Activated naive CD4-positive, alpha-beta T cell treated with anti-CD3 and anti-CD28 coated beads for 36 hours (primary cell): ENCODE measurements at regions of chr10 and their contacts with region 1.

Region 1: DNA sequence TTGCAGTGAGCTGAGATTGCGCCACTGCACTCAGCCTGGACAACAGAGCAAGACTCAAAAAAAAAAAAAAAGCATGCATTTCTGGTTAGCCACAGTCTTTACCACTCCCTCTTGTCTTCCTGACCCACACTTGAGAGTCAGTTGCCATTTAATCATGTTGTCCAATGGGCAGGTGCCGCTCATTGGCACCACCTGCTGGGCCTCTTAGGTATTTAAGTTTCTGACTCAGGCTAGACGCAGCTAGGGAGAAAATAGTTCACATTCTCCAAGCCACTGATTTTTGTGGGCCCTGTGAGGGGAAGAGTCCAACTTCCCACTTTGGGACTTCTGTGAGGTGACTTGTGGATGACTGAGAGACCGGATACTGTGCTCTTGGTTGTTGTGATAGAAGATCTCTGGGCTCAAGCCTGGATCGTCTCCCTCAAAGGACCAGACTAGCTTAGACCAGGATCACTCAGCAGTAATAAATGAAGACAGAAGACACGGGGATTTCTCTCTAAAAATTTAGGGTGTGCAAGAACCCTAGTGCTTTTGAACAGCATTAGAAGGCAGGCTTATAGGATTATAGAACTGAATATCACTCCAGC is 26.8 kb upstream of the SORCS3 start:
- DNase-seq: peak; percentile 55
- H3K4me3 Mint-ChIP-seq: no peak overlapping the region
- H3K27ac Mint-ChIP-seq: no peak overlapping the region
- H3K4me1 Mint-ChIP-seq: no peaks in the 10 kb centered on the region
- H3K27me3 Mint-ChIP-seq: no peaks in the 10 kb centered on the region

Region 2: GRCh38 chr10:104406715-104407650 is 207.4 kb before region 1 on chr10:
- CTCF ChIA-PET with region 1: interaction called, 4 read pairs
- intact Hi-C with region 1: loop called (anchors 1 kb)
- DNase-seq: no peak
- H3K4me3 Mint-ChIP-seq: no peak overlapping the region
- H3K27ac Mint-ChIP-seq: no peak overlapping the region
- H3K4me1 Mint-ChIP-seq: peaks cover 2% of the 10 kb centered on the region
- H3K27me3 Mint-ChIP-seq: peaks cover 12% of the 10 kb centered on the region

Region 3: GRCh38 chr10:104540181-104540580 is 74.2 kb before region 1 on chr10:
- CTCF ChIA-PET with region 1: no interaction called
- intact Hi-C with region 1: no loop called
- DNase-seq: no peak
- H3K4me3 Mint-ChIP-seq: no peak overlapping the region
- H3K27ac Mint-ChIP-seq: no peak overlapping the region
- H3K4me1 Mint-ChIP-seq: no peaks in the 10 kb centered on the region
- H3K27me3 Mint-ChIP-seq: peaks cover 22% of the 10 kb centered on the region

Region 4: DNA sequence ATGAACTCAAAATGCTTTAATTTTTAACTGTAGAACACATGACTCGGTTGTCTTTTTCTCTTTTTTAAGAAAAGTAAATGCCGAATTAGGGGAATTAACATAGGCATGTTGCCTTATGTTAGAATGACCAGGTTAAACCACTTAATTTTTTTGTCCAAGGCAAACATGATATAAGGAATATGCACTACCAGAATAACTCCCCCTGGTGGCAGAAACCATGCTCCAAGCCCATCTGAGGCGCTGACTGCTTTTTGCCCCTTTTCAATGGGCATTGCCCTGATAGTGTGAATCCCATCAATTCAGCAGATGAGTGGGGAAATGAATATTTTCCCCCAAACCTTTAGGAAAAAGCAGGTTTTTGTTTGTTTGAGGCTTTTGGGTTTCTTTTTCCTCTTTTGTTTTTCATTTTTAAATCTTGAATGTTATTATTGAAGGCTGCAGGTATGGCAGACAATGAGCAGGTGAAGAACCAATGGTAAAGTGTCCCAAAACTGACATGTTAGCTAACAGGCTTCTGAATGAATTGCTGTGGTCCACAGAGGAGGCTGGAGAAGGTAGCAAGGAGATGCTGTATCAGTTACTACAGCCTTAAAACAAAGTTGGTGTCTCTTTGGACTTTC is 311.0 kb after region 1 on chr10:
- CTCF ChIA-PET with region 1: no interaction called
- intact Hi-C with region 1: no loop called
- DNase-seq: peak; percentile 61
- H3K4me3 Mint-ChIP-seq: no peak overlapping the region
- H3K27ac Mint-ChIP-seq: no peak overlapping the region
- H3K4me1 Mint-ChIP-seq: no peaks in the 10 kb centered on the region
- H3K27me3 Mint-ChIP-seq: no peaks in the 10 kb centered on the region